T-cell (primary cell): ENCODE measurements at regions of chr12 and their contacts with region 1.

Region 1: DNA sequence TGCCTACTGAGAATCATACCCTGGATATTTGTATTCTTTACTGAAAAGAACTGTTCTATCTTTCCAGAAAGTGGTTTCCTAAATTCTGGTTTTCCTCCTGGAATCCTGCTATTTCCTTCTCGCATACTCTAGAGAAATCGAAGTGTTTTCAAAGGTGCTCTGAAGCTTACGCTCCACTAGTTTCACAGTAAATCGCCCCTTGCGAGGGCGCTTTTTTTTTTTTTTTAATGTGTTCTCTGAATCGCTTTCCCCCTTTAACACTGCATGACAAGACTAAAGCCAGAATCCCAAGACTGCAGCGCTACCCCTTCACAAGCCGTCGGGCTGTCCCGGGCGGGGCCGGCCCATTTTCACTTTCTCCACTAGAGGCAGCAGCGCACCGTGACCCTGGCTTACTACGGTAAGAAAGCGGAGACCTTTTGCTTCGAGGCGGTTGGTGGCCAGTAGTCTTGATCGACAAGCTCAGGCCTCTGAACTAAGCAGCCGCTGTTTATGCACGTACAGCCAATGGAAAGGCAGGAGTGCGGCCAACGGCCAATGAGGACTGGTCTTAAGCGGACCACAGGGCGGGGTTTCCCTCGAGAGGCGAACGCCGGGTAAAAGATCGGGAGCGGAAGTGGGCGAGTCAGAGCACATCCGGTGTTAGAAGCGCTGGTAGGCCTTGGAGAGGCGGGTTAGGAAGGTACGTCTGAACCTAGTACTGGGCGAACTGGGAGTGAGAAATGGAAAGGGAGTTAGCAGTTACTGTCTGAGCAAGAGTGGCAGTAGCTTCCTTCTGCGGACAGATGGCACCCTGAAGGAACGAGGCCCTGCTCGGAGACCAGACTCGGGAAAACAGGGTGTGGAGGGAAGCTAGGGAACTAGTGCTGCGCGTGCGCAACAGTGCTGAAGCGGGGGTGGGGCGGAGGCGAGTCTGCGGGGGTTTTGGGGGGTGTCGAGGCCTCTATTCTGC is at the start of gene TMBIM6:
- DNase-seq: peak; percentile 94 to 100 (median 99)
- ATAC-seq: peak; percentile 87 to 94 (median 94)
- H3K4me3 ChIP-seq: peak within 1 kb of the TSS; percentile 70 to 90
- H3K4me3 Mint-ChIP-seq: peak within 1 kb of the TSS; percentile 87 to 97 (median 92)
- H3K27ac ChIP-seq: peak within 1 kb of the TSS; percentile 96
- H3K27ac Mint-ChIP-seq: peak within 1 kb of the TSS; percentile 97 to 99
- H3K4me1 ChIP-seq: peaks cover 32 to 33% of the 10 kb centered on the region in 2 experiments
- H3K4me1 Mint-ChIP-seq: peaks cover 47% of the 10 kb centered on the region in 3 donors
- H3K27me3 ChIP-seq: no peaks in the 10 kb centered on the region
- H3K27me3 Mint-ChIP-seq: no peaks in the 10 kb centered on the region
- total RNA-seq, gene TMBIM6: 333 to 426 (median 401) TPM

Region 2: DNA sequence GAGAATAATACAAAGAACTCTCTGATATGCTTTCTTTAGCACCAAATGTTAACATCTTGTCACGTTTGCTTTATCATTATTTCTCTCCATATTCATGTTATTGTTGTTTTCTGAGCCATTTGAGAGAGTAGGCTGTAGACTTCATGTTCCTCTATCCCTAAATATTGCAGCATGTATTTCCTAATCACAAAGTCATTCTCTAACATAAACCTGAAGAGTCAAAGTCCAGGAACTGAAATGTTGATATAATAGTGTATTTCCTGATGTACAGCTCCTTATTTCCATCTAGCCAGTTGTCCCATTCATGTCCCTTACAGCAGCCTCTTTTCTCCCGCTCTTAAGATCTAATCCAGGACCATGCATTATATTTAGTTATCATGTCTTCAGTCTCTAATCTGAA is 301.2 kb before region 1 on chr12:
- CTCF ChIA-PET with region 1: no interaction called
- POLR2A ChIA-PET with region 1: no interaction called
- DNase-seq: no peak
- ATAC-seq: no peak
- H3K4me3 ChIP-seq: no peak overlapping the region
- H3K4me3 Mint-ChIP-seq: no peak overlapping the region
- H3K27ac ChIP-seq: no peak overlapping the region
- H3K27ac Mint-ChIP-seq: no peak overlapping the region
- H3K4me1 ChIP-seq: no peaks in the 10 kb centered on the region
- H3K4me1 Mint-ChIP-seq: peaks cover 0 to 8% (median 0%) of the 10 kb centered on the region in 3 donors
- H3K27me3 ChIP-seq: no peaks in the 10 kb centered on the region
- H3K27me3 Mint-ChIP-seq: no peaks in the 10 kb centered on the region

Region 3: GRCh38 chr12:49623142-49623904 is 117.9 kb before region 1 on chr12 and contains the start of gene PRPF40B:
- CTCF ChIA-PET with region 1: interaction called in 1 of 2 experiments, 11 read pairs
- POLR2A ChIA-PET with region 1: interaction called in 1 of 2 experiments, 4 read pairs
- DNase-seq: peak; percentile 75 to 91 (median 83)
- ATAC-seq: peak; percentile 82 to 87 (median 84)
- H3K4me3 ChIP-seq: peak within 1 kb of the TSS; percentile 66 to 74
- H3K4me3 Mint-ChIP-seq: peak within 1 kb of the TSS; percentile 83 to 86 (median 85)
- H3K27ac ChIP-seq: peak within 1 kb of the TSS; percentile 57
- H3K27ac Mint-ChIP-seq: peak within 1 kb of the TSS; percentile 89 to 92
- H3K4me1 ChIP-seq: peaks cover 17 to 30% of the 10 kb centered on the region in 2 experiments
- H3K4me1 Mint-ChIP-seq: peaks cover 21 to 29% (median 28%) of the 10 kb centered on the region in 3 donors
- H3K27me3 ChIP-seq: no peaks in the 10 kb centered on the region
- H3K27me3 Mint-ChIP-seq: peaks cover 0 to 10% of the 10 kb centered on the region in 2 donors
- total RNA-seq, gene PRPF40B: 7.4 to 18.0 (median 16.5) TPM

Region 4: GRCh38 chr12:49687941-49688340 is 53.3 kb before region 1 on chr12:
- CTCF ChIA-PET with region 1: interaction called in 1 of 2 experiments, 10 read pairs
- POLR2A ChIA-PET with region 1: no interaction called
- DNase-seq: no peak
- ATAC-seq: no peak
- H3K4me3 ChIP-seq: no peak overlapping the region
- H3K4me3 Mint-ChIP-seq: no peak overlapping the region
- H3K27ac ChIP-seq: no peak overlapping the region
- H3K27ac Mint-ChIP-seq: peak overlapping the region in 1 of 2 donors; percentile 19
- H3K4me1 ChIP-seq: peaks cover 24 to 25% of the 10 kb centered on the region in 2 experiments
- H3K4me1 Mint-ChIP-seq: peaks cover 60 to 75% (median 62%) of the 10 kb centered on the region in 3 donors
- H3K27me3 ChIP-seq: no peaks in the 10 kb centered on the region
- H3K27me3 Mint-ChIP-seq: no peaks in the 10 kb centered on the region

Region 5: DNA sequence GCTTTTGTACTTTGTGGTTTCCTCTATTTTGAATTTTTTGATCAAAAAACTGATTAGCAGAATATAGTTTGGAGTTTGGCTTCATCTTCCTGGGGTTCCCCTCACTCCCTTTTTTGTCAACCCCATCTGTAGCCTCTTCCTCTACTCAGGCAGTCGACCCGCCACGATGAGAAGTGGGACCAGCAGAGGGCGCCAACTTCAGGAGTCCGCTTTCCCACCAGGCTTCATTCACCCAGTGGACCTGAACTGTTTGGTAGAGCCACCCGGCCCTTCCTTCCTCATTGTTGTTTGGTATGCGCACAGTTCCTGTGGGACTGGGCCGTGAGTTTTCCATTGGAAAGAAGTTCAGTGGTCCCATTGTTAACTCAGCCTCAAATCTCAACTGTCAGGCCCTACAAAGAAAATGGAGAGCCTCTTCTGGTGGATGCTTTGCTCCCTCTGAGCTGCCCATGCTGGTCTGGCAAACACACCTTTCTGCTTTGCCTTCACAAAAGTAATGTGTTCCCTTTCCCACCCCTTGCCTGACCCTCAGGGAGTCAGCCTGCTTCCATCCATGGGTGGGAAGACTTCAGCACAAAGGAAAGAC is 21.9 kb after region 1 on chr12:
- CTCF ChIA-PET with region 1: interaction called, 4 to 57 read pairs
- POLR2A ChIA-PET with region 1: interaction called, 12 to 14 read pairs
- DNase-seq: peak; percentile 46 to 89 (median 74)
- ATAC-seq: peak; percentile 69 to 84 (median 77)
- H3K4me3 ChIP-seq: peak overlapping the region in 1 of 2 donors; percentile 49
- H3K4me3 Mint-ChIP-seq: peak overlapping the region in 2 of 3 donors; percentile 39 to 48
- H3K27ac ChIP-seq: peak overlapping the region; percentile 59
- H3K27ac Mint-ChIP-seq: peak overlapping the region; percentile 86 to 90
- H3K4me1 ChIP-seq: peaks cover 23 to 41% of the 10 kb centered on the region in 2 experiments
- H3K4me1 Mint-ChIP-seq: peaks cover 57 to 65% (median 63%) of the 10 kb centered on the region in 3 donors
- H3K27me3 ChIP-seq: no peaks in the 10 kb centered on the region
- H3K27me3 Mint-ChIP-seq: no peaks in the 10 kb centered on the region

Region 6: GRCh38 chr12:49776413-49776812 is 35.2 kb after region 1 on chr12:
- CTCF ChIA-PET with region 1: interaction called, 10 to 26 read pairs
- POLR2A ChIA-PET with region 1: interaction called in 1 of 2 experiments, 7 read pairs
- DNase-seq: peak in 29 of 35 experiments; percentile 15 to 70 (median 27)
- ATAC-seq: peak; percentile 73 to 80 (median 75)
- H3K4me3 ChIP-seq: no peak overlapping the region
- H3K4me3 Mint-ChIP-seq: no peak overlapping the region
- H3K27ac ChIP-seq: no peak overlapping the region
- H3K27ac Mint-ChIP-seq: no peak overlapping the region
- H3K4me1 ChIP-seq: peaks cover 0 to 14% of the 10 kb centered on the region in 2 experiments
- H3K4me1 Mint-ChIP-seq: peaks cover 10 to 21% (median 16%) of the 10 kb centered on the region in 3 donors
- H3K27me3 ChIP-seq: peaks cover 0 to 26% of the 10 kb centered on the region in 2 experiments
- H3K27me3 Mint-ChIP-seq: peaks cover 18 to 24% of the 10 kb centered on the region in 2 donors

Region 7: GRCh38 chr12:49828133-49829091 is 87.2 kb after region 1 on chr12 and contains the start of gene NCKAP5L:
- CTCF ChIA-PET with region 1: interaction called, 3 to 13 read pairs
- POLR2A ChIA-PET with region 1: no interaction called
- DNase-seq: peak; percentile 83 to 96 (median 92)
- ATAC-seq: peak; percentile 95 to 97 (median 96)
- H3K4me3 ChIP-seq: peak within 1 kb of the TSS; percentile 72 to 76
- H3K4me3 Mint-ChIP-seq: peak within 1 kb of the TSS; percentile 88 to 99 (median 96)
- H3K27ac ChIP-seq: peak within 1 kb of the TSS; percentile 45
- H3K27ac Mint-ChIP-seq: peak within 1 kb of the TSS; percentile 98 to 99
- H3K4me1 ChIP-seq: peaks cover 7 to 28% of the 10 kb centered on the region in 2 experiments
- H3K4me1 Mint-ChIP-seq: peaks cover 23 to 34% (median 34%) of the 10 kb centered on the region in 3 donors
- H3K27me3 ChIP-seq: no peaks in the 10 kb centered on the region
- H3K27me3 Mint-ChIP-seq: peaks cover 0 to 3% of the 10 kb centered on the region in 2 donors
- total RNA-seq, gene NCKAP5L: 11.1 to 12.9 (median 12.6) TPM

Region 8: DNA sequence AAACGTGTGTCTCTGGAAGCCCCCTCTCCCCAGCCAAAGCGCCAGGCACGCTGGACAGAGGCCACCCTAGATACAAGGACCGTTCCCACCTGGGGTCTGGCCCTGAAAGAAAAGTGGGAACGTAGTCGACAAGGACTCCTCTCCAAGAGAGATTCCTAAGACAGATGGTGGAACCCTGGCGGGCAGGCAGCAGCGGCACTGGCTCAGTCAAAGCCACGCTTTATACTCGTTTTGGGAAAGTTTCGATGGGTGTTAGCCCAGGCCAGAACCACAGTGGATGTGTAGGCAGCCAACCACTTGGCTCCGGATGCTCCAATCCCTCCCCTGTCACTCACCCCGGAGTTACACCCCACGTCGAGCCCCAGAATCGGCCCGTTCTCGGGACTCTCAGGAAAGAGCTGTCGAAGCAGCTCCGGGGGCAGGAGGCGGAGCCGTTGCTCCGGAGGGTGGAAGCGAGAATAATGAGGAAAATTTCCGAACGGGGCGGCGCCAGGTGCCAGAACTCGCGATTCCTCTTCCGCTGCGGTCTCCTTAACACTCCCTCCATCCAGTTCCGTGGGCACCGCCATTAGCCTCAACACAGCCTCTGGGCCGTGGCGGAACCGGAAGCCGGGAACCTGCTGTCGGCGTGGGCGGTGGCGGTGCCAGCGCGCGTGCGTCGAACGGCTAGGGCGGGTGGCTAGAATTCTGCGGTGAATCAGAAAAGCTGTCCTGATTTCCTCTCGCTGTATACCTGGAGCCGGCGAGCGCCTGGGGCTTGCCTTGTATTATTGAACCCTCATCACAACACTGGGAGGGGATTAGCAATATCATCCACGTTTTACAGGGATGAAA is 101.5 kb after region 1 on chr12 and contains the start of gene BCDIN3D:
- CTCF ChIA-PET with region 1: interaction called in 1 of 2 experiments, 20 read pairs
- POLR2A ChIA-PET with region 1: interaction called, 3 to 7 read pairs
- DNase-seq: peak; percentile 82 to 95 (median 89)
- ATAC-seq: peak; percentile 94 to 97 (median 96)
- H3K4me3 ChIP-seq: peak within 1 kb of the TSS; percentile 81 to 98
- H3K4me3 Mint-ChIP-seq: peak within 1 kb of the TSS; percentile 87 to 94 (median 89)
- H3K27ac ChIP-seq: peak within 1 kb of the TSS; percentile 90
- H3K27ac Mint-ChIP-seq: peak within 1 kb of the TSS; percentile 92
- H3K4me1 ChIP-seq: peaks cover 6 to 30% of the 10 kb centered on the region in 2 experiments
- H3K4me1 Mint-ChIP-seq: peaks cover 37 to 43% (median 40%) of the 10 kb centered on the region in 3 donors
- H3K27me3 ChIP-seq: no peaks in the 10 kb centered on the region
- H3K27me3 Mint-ChIP-seq: peaks cover 0 to 3% of the 10 kb centered on the region in 2 donors
- total RNA-seq, gene BCDIN3D: 4.7 to 12.8 (median 12.3) TPM